ENCODE measurements at regions of chr1 and their contacts with region 1.

Region 1: GRCh38 chr1:179293340-179294327 is at the start of gene SOAT1:
- DNase-seq: peak; percentile 97
- H3K4me3 ChIP-seq: peak within 1 kb of the TSS; percentile 72 to 92 (median 80)
- H3K27ac ChIP-seq: peak within 1 kb of the TSS; percentile 89 to 95 (median 94)
- H3K4me1 ChIP-seq: peaks cover 0 to 33% (median 21%) of the 10 kb centered on the region in 4 donors
- H3K27me3 ChIP-seq: no peaks in the 10 kb centered on the region
- CTCF ChIP-seq: no peak
- EP300 ChIP-seq: no peak
- POLR2A ChIP-seq: peak; percentile 63 to 81
- total RNA-seq, gene SOAT1: 13.2 to 14.7 (median 14.1) TPM

Region 2: DNA sequence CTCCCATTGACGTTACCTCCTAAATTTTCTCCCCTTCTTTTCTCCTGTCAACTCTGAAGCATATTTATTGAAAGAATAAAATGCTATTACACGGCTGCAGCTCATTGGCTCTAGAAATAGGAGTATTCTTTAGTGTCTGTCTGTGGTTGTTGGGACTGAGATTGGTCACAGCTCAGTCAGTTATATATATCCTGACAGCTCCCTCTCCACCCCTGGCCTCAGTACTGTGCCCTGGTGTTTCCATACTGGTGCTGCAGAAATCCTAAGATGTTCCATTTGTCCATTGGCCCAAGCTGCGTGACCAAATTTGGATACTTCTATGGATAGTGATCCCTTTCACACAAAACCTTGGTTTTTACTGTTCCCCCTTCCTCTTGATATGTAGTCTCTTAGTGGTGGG is 501.2 kb before region 1 on chr1:
- intact Hi-C with region 1: no loop called
- DNase-seq: no peak
- H3K4me3 ChIP-seq: no peak overlapping the region
- H3K27ac ChIP-seq: no peak overlapping the region
- H3K4me1 ChIP-seq: no peaks in the 10 kb centered on the region
- H3K27me3 ChIP-seq: no peaks in the 10 kb centered on the region
- CTCF ChIP-seq: no peak
- EP300 ChIP-seq: no peak
- POLR2A ChIP-seq: no peak

Region 3: GRCh38 chr1:179025125-179025974 is 268.3 kb before region 1 on chr1 and contains the start of gene FAM20B:
- intact Hi-C with region 1: loop called (anchors 5 kb)
- DNase-seq: peak; percentile 97
- H3K4me3 ChIP-seq: peak within 1 kb of the TSS; percentile 78 to 97 (median 94)
- H3K27ac ChIP-seq: peak within 1 kb of the TSS; percentile 93 to 99 (median 98)
- H3K4me1 ChIP-seq: peaks cover 0 to 42% (median 33%) of the 10 kb centered on the region in 4 donors
- H3K27me3 ChIP-seq: no peaks in the 10 kb centered on the region
- CTCF ChIP-seq: no peak
- EP300 ChIP-seq: no peak
- POLR2A ChIP-seq: no peak
- total RNA-seq, gene FAM20B: 36.3 to 51.0 (median 48.3) TPM

Region 4: DNA sequence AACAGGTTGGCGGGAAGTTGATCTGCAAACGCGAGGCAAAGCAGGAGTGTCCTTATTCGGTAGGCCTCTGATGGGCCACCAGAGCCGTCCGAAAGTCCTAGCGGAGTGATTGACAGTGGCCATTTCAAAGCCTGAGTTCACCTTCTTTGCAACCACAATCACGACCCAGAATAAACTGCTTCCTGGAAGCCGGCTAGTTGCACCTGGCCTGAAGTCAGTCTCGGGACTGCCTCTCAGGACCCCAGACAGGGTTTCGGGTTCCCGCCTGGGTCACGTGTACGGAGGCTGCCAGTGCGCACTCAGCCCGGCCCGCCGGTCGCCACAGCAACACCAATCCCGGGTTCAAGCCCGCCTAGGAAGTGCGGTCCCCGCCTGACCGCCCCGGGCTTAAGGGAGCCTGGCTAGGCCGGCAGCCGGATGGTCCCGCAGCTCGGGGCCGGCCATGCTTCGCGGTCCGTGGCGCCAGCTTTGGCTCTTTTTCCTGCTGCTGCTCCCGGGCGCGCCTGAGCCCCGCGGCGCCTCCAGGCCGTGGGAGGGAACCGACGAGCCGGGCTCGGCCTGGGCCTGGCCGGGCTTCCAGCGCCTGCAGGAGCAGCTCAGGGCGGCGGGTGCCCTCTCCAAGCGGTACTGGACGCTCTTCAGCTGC is 211.8 kb before region 1 on chr1 and contains the start of gene TOR3A:
- intact Hi-C with region 1: loop called (anchors 2 kb)
- DNase-seq: peak; percentile 97
- H3K4me3 ChIP-seq: peak within 1 kb of the TSS; percentile 64 to 94 (median 86)
- H3K27ac ChIP-seq: peak within 1 kb of the TSS; percentile 84 to 92 (median 91)
- H3K4me1 ChIP-seq: peaks cover 0 to 24% (median 20%) of the 10 kb centered on the region in 4 donors
- H3K27me3 ChIP-seq: no peaks in the 10 kb centered on the region
- CTCF ChIP-seq: no peak
- EP300 ChIP-seq: no peak
- POLR2A ChIP-seq: peak; percentile 53 to 74
- total RNA-seq, gene TOR3A: 38.8 to 53.5 (median 39.9) TPM

Region 5: GRCh38 chr1:179121159-179121938 is 172.3 kb before region 1 on chr1:
- intact Hi-C with region 1: loop called (anchors 1 kb)
- DNase-seq: no peak
- H3K4me3 ChIP-seq: no peak overlapping the region
- H3K27ac ChIP-seq: no peak overlapping the region
- H3K4me1 ChIP-seq: peaks cover 0 to under 1% (median 0%) of the 10 kb centered on the region in 4 donors
- H3K27me3 ChIP-seq: no peaks in the 10 kb centered on the region
- CTCF ChIP-seq: peak; percentile 11 to 50 (median 40)
- EP300 ChIP-seq: no peak
- POLR2A ChIP-seq: no peak

Region 6: GRCh38 chr1:179229214-179230140 is 64.2 kb before region 1 on chr1 and contains the start of gene ABL2:
- intact Hi-C with region 1: loop called (anchors 5 kb)
- DNase-seq: peak; percentile 69
- H3K4me3 ChIP-seq: peak within 1 kb of the TSS; percentile 85 to 98 (median 98)
- H3K27ac ChIP-seq: peak within 1 kb of the TSS; percentile 88 to 93 (median 88)
- H3K4me1 ChIP-seq: peaks cover 0 to 24% (median 14%) of the 10 kb centered on the region in 4 donors
- H3K27me3 ChIP-seq: no peaks in the 10 kb centered on the region
- CTCF ChIP-seq: no peak
- EP300 ChIP-seq: no peak
- POLR2A ChIP-seq: no peak
- total RNA-seq, gene ABL2: 10.3 to 32.6 (median 15.0) TPM

Measured in sigmoid colon (tissue), 7 donors.